ENCODE measurements at regions of chr11 and their contacts with region 1.

Region 1: GRCh38 chr11:96342961-96343711 is at the start of gene MAML2:
- DNase-seq: peak; percentile 87
- H3K4me3 Mint-ChIP-seq: peak within 1 kb of the TSS; percentile 95
- H3K27ac Mint-ChIP-seq: peak within 1 kb of the TSS; percentile 97
- H3K4me1 Mint-ChIP-seq: peaks cover 19% of the 10 kb centered on the region
- H3K27me3 Mint-ChIP-seq: no peaks in the 10 kb centered on the region
- CTCF ChIP-seq: peak; percentile 80
- total RNA-seq, gene MAML2: 16.7 and 22.7 TPM in 2 replicates

Region 2: DNA sequence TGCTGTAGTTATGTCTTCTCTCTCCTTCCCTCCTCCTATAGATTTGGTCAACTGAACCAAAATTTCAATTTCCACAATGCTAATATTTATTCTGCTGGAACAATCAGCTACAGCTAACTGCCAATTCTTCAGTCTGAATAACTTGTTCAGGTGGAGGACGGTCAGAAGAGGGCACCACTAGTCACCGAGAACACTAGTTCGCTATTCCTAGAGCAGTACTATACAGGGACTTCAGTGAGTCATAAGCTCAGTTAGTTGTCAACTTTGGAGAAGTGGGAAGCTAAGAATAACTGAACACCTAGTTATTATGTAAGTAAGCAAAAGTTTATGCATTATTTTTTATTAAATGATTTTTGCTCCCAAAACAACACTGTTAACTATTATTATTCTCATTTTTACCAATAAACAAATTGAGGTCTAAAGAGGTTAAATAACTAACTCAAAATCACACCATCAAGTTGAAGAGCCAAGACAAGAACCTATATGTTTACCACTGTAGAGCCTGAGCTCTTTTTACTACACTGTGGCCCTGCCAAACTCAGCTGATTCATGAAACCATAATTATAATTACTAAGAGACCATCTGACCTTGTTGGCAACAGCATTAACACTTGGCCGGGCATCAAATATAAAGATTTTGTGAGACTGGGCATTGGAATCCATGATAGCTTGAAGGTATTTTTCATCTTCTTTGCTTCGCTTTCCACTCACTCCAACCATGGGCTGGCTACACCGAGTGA is 493.9 kb before region 1 on chr11:
- CTCF ChIA-PET with region 1: interaction called, 28 read pairs
- intact Hi-C with region 1: no loop called
- DNase-seq: peak; percentile 38
- H3K4me3 Mint-ChIP-seq: no peak overlapping the region
- H3K27ac Mint-ChIP-seq: no peak overlapping the region
- H3K4me1 Mint-ChIP-seq: no peaks in the 10 kb centered on the region
- H3K27me3 Mint-ChIP-seq: no peaks in the 10 kb centered on the region
- CTCF ChIP-seq: no peak

Region 3: DNA sequence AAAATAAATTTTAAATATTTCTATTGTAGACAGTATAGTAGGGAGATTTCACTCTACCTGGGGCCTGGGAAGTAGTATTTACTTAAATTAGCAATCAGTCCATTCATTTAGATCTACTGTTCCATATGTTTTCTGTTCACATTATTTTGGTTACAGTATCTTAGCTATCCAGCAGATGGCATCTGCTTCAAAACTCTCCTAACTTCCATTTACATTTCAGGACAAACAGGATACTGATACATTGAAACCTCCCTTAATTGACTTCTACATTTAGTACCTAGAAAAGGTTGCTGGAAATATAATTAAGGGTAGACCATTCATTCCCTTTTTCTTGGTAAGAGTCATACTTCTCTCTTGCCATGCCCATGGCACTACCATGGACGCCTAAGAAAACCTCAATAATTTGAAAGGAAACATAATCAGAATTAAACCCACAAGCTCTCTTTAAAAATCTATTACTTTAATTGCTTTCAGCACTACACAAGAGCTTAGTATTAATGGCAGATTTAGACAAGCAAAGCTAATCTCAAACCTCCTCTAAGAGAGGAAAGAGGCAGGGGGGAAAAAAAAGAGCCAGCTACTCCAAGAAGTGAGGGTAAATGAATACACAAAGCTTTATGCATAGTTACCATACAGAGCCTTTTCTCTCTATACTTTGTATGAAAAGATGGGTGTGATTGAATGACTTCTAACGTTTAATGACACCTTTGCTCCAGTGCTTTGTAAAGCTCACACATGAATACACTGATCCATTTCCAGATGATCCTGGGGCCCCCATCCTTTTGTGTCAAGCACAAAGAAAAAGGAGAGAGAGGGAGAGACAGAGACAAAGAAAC is 288.0 kb before region 1 on chr11:
- CTCF ChIA-PET with region 1: interaction called, 5 read pairs
- intact Hi-C with region 1: loop called (anchors 2 kb)
- DNase-seq: no peak
- H3K4me3 Mint-ChIP-seq: no peak overlapping the region
- H3K27ac Mint-ChIP-seq: no peak overlapping the region
- H3K4me1 Mint-ChIP-seq: peaks cover 44% of the 10 kb centered on the region
- H3K27me3 Mint-ChIP-seq: no peaks in the 10 kb centered on the region
- CTCF ChIP-seq: no peak

Region 4: DNA sequence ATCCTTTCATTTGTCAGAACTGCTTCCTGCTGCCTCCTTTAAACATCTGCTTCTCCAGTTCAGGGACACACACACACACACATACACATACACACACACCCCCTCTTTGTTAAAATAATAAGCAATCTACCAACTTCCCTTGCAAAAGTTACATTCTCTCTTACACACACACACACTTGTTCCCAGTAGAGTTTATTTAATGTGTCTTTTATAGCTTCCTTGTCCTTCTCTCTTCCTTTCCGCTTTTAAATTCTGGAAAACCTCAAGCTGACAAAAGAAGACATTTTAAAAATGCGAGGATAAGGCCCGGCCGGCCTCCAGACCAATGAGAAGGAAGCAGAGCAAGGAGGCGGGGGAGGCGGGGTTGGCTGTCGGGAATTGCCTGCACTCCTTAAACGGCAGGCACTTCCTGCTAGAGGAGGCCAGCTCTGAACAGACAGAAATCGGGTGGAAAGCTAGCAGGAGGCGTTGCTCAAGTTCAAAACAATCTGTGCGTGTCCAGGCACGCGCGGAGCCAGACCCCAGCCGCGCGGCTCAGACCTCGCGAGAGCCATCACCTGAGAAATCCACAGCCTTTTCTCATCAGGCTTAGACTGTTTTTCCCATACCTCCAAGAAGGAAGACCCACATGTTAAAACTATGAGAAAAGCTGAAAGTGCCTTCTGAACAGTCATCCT is 100.0 kb before region 1 on chr11:
- CTCF ChIA-PET with region 1: interaction called, 16 read pairs
- intact Hi-C with region 1: loop called (anchors 5 kb)
- DNase-seq: peak; percentile 91
- H3K4me3 Mint-ChIP-seq: peak overlapping the region; percentile 70
- H3K27ac Mint-ChIP-seq: peak overlapping the region; percentile 75
- H3K4me1 Mint-ChIP-seq: peaks cover 37% of the 10 kb centered on the region
- H3K27me3 Mint-ChIP-seq: no peaks in the 10 kb centered on the region
- CTCF ChIP-seq: no peak

Region 5: GRCh38 chr11:96279018-96279895 is 63.9 kb before region 1 on chr11:
- CTCF ChIA-PET with region 1: interaction called, 6 read pairs
- intact Hi-C with region 1: loop called (anchors 5 kb)
- DNase-seq: no peak
- H3K4me3 Mint-ChIP-seq: no peak overlapping the region
- H3K27ac Mint-ChIP-seq: peak overlapping the region; percentile 73
- H3K4me1 Mint-ChIP-seq: peaks cover 53% of the 10 kb centered on the region
- H3K27me3 Mint-ChIP-seq: no peaks in the 10 kb centered on the region
- CTCF ChIP-seq: no peak

Region 6: DNA sequence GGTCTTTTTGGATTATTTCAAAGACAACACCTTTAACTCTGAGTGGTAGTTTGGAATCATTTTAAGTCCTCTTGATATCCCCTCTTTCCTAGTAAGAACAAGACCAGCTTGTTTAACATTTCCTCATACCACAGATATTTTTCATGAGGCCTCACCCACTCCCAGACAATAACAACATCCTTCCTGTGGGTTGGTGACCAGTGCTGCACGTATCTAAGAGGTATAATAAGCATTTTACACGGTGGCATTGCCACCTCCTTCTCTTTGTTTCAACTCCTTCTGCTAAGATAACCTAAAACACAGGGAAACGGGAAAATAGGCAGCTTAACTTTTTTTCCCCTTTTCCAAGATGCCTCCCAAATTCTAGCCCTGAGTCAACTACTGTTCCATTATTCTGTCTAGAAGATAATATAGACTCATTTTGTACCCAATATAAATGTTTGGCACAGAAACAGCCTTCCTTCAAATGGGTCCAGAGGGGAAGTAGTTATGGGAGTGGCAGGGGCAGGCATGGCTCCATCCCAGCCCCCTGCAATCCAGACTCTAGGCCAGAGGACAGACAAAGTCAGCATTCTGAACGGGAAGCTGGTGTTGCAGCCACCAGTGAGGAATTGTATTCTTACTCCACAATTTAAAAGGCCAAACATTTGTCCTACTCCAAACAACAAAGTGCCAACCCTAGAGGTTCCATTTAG is 28.7 kb before region 1 on chr11:
- CTCF ChIA-PET with region 1: interaction called, 6 read pairs
- intact Hi-C with region 1: loop called (anchors 2 kb)
- DNase-seq: peak; percentile 57
- H3K4me3 Mint-ChIP-seq: peak overlapping the region; percentile 54
- H3K27ac Mint-ChIP-seq: peak overlapping the region; percentile 97
- H3K4me1 Mint-ChIP-seq: peaks cover 68% of the 10 kb centered on the region
- H3K27me3 Mint-ChIP-seq: no peaks in the 10 kb centered on the region
- CTCF ChIP-seq: no peak

Measured in Calu3 (cell line).